Activated CD4-positive, alpha-beta memory T cell treated with anti-CD3 and anti-CD28 coated beads for 36 hours (primary cell): ENCODE measurements at regions of chr1 and their contacts with region 1.

Region 1: DNA sequence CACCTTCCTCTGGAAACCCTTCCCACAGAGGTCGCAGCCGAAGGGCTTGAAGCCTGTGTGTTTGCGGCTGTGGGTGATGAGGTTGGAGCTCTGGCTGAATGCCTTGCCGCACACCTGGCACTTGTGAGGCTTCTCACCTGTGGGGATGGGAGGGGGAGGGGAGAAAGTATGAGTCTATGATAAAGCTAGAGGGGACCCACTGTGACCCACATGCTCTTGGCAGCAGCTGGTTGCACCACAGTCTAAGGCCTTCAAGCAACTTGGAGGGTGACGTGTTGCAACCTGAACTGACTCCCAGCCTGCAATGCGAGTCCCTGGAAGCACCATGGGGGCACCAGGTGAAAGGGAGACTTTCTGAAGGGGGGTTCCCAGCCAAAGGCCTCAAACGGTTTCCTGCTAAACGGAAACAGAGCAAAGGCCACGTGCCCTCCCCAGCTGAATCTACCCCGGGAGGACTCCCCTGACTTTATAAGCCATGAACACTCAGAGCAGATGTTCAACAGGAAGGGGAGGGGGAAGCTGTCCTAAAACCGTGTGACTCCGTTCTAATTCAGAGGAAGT is 10.6 kb downstream of the GFI1 start:
- DNase-seq: peak; percentile 85
- H3K4me3 Mint-ChIP-seq: peak overlapping the region; percentile 54
- H3K27ac Mint-ChIP-seq: peak overlapping the region; percentile 86
- H3K4me1 Mint-ChIP-seq: peaks cover 87% of the 10 kb centered on the region
- H3K27me3 Mint-ChIP-seq: no peaks in the 10 kb centered on the region

Region 2: GRCh38 chr1:92310185-92310597 is 166.0 kb before region 1 on chr1:
- CTCF ChIA-PET with region 1: interaction called, 27 read pairs
- POLR2A ChIA-PET with region 1: interaction called, 5 read pairs
- intact Hi-C with region 1: no loop called
- DNase-seq: no peak
- H3K4me3 Mint-ChIP-seq: no peak overlapping the region
- H3K27ac Mint-ChIP-seq: no peak overlapping the region
- H3K4me1 Mint-ChIP-seq: peaks cover 39% of the 10 kb centered on the region
- H3K27me3 Mint-ChIP-seq: no peaks in the 10 kb centered on the region

Region 3: GRCh38 chr1:92367496-92367895 is 108.7 kb before region 1 on chr1:
- CTCF ChIA-PET with region 1: interaction called, 3 read pairs
- POLR2A ChIA-PET with region 1: interaction called, 3 read pairs
- intact Hi-C with region 1: loop called (anchors 1 kb)
- DNase-seq: no peak
- H3K4me3 Mint-ChIP-seq: no peak overlapping the region
- H3K27ac Mint-ChIP-seq: no peak overlapping the region
- H3K4me1 Mint-ChIP-seq: peaks cover 38% of the 10 kb centered on the region
- H3K27me3 Mint-ChIP-seq: no peaks in the 10 kb centered on the region

Region 4: GRCh38 chr1:92464588-92465255 is 11.4 kb before region 1 on chr1:
- CTCF ChIA-PET with region 1: no interaction called
- POLR2A ChIA-PET with region 1: interaction called, 4 read pairs
- intact Hi-C with region 1: loop called (anchors 2 kb)
- DNase-seq: no peak
- H3K4me3 Mint-ChIP-seq: no peak overlapping the region
- H3K27ac Mint-ChIP-seq: peak overlapping the region; percentile 67
- H3K4me1 Mint-ChIP-seq: peaks cover 61% of the 10 kb centered on the region
- H3K27me3 Mint-ChIP-seq: no peaks in the 10 kb centered on the region